Activated CD8-positive, alpha-beta T cell treated with anti-CD3 and anti-CD28 coated beads for 36 hours (primary cell): ENCODE measurements at regions of chr1 and their contacts with region 1.

Region 1: DNA sequence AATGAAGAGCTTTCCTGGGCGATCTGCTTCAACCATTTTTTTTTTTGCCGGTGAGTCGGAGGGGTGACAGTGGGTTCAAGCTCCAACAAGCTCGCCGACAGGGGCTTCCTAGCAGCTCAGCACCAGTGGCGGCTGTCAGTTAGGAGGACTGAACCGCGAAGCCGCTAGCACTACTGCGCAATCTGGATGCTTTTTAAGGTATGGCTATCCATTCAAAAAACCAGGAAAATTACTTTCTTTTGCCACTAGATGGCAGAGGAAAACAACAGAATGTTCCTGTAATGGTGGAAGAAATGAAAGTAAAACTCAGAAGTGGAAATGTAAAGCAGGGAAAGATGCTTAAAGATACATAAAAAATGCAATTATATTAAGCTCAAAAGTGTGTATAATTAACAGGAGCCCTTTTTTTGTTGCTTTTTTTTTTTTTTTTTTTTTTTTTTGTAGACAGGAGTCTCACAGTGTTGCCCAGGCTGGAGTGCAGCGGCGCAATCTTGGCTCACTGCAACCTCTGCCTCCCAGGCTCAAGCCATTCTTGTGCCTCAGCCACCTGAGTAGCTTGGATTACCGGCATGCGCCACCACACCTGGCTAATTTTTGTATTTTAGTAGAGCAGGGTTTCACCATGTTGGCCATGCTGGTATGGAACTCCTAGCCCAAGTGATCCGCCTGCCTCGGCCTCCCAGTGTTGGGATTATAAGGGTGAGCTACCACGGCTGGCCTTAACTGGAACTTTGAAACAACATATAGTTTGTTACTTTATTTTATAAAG is 8.5 kb downstream of the KYAT3 start:
- DNase-seq: peak; percentile 48
- ATAC-seq: peak; percentile 63
- H3K4me3 Mint-ChIP-seq: peak overlapping the region; percentile 6
- H3K27ac Mint-ChIP-seq: peak overlapping the region; percentile 87
- H3K4me1 Mint-ChIP-seq: peaks cover 86% of the 10 kb centered on the region
- H3K27me3 Mint-ChIP-seq: no peaks in the 10 kb centered on the region
- CTCF ChIP-seq: peak; percentile 77

Region 2: DNA sequence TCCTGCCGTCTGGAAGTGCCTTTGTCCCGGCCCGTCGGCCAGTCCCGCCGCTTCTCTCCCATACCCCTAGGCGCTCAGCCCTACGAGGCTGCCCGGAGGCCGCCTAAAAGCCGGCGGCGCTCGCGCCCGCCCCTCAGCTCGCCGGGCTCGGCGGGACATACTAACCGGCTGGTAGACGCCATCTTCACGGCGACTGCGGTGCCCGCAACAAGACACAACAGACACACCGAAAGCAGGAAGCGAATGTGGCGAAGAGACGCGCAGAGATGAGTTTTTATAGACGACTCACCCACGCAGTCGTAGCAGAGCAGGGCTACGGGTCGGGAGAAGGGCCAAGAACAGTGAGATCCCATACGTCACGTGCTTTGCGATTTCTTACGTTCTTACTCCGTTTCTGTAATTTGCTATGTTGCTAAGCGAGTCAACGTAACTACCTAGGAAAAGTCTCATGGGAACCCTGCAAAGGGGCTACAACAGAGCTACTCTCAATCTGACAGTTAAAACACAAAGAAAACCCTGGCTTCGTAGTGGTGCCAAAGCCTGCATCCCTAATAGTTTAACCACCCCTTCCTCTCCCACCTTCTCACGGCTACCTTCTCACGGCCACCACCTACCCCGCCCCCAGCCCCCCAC is 92.5 kb before region 1 on chr1 and contains the start of gene GTF2B:
- CTCF ChIA-PET with region 1: no interaction called
- POLR2A ChIA-PET with region 1: no interaction called
- intact Hi-C with region 1: no loop called
- DNase-seq: peak; percentile 97
- ATAC-seq: peak; percentile 89
- H3K4me3 Mint-ChIP-seq: peak within 1 kb of the TSS; percentile 81
- H3K27ac Mint-ChIP-seq: peak within 1 kb of the TSS; percentile 96
- H3K4me1 Mint-ChIP-seq: peaks cover 38% of the 10 kb centered on the region
- H3K27me3 Mint-ChIP-seq: no peaks in the 10 kb centered on the region
- CTCF ChIP-seq: no peak
- total RNA-seq, gene GTF2B: 40.7 to 42.0 TPM

Region 3: DNA sequence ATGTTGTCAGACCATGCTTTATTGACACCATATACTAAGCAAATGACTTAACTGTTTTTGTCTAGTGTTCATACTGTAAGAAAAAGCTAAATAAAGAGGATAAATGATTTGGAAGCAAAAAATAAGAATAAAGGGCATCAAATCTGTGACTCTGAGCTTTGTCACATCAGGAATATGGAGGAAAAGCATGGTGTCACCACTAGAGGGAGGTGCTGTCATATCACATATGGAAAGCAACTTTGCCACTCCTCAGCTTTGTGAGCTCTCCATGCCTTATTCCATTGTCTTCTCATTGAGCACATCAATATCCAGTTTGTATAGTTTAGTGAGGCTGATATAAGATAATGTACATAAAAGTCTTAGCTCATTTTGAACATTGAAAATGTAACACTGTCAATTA is 101.8 kb after region 1 on chr1:
- CTCF ChIA-PET with region 1: interaction called, 13 read pairs
- POLR2A ChIA-PET with region 1: no interaction called
- intact Hi-C with region 1: no loop called
- DNase-seq: peak; percentile 59
- ATAC-seq: no peak
- H3K4me3 Mint-ChIP-seq: no peak overlapping the region
- H3K27ac Mint-ChIP-seq: no peak overlapping the region
- H3K4me1 Mint-ChIP-seq: peaks cover 7% of the 10 kb centered on the region
- H3K27me3 Mint-ChIP-seq: no peaks in the 10 kb centered on the region
- CTCF ChIP-seq: peak; percentile 42